Activated T-helper 1 cell treated with anti-CD3 and anti-CD28 coated beads, Interleukin-12 subunit alpha, Interleukin-12 subunit beta, Interleukin-2, Interleukin-4 antibody, amounts not matched to agents 30 ng/mL and 10 ng/mL and 1 ng/mL, durations not matched to agents 14 hours and 24 hours and 36 hours (primary cell): ENCODE measurements at regions of chr5 and their contacts with region 1.

Region 1: GRCh38 chr5:68315679-68316271 is 100.2 kb downstream of the PIK3R1 start:
- DNase-seq: peak; percentile 39
- H3K4me3 Mint-ChIP-seq: no peak overlapping the region
- H3K27ac Mint-ChIP-seq: no peak overlapping the region
- H3K4me1 Mint-ChIP-seq: peaks cover 18% of the 10 kb centered on the region
- H3K27me3 Mint-ChIP-seq: peaks cover 20% of the 10 kb centered on the region

Region 2: DNA sequence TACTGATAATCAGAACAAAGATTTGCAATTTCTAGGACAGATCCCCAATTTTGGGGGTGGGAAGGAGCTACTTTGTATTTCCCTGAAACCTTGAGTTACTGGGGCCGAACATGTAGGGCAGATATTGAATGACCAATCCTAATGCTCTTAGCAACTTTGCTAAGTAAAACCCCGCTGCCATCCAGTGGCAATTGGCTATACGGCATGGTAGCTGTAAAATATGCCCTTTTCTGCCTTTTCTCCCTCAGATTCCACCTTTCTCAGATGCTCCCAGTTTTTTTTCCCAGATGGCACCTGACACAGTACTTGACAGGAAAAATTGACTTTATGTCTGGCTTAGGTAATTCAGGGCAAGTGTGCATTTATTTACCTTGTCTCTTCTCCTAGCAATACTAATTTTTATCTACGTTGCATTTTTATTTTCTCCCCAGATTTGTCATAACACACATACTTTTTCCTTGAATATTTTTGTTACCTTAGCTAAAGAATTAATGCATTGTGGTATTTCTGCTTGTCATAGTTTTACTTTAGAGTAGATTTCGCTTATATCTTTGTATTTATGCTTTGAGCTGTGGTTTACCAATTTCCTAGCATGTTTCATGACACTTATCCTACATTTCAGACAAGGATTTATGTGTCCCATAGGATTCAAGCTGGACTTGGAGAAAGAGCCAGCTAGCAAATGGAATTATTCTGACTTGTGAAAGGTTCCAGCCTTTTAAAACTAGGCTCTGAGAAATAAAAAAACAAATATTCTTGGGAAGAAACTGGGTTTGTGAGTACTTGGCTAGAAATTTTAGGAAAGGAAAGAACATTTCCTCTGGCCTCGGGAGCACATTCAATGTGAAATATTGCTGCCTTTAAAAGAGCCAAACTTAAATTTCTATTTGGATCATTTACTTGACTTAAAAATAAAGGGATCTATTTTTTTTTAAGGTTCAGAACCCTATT is 62.8 kb before region 1 on chr5:
- intact Hi-C with region 1: no loop called
- DNase-seq: no peak
- H3K4me3 Mint-ChIP-seq: no peak overlapping the region
- H3K27ac Mint-ChIP-seq: no peak overlapping the region
- H3K4me1 Mint-ChIP-seq: peaks cover 89% of the 10 kb centered on the region
- H3K27me3 Mint-ChIP-seq: peaks cover 2% of the 10 kb centered on the region

Region 3: DNA sequence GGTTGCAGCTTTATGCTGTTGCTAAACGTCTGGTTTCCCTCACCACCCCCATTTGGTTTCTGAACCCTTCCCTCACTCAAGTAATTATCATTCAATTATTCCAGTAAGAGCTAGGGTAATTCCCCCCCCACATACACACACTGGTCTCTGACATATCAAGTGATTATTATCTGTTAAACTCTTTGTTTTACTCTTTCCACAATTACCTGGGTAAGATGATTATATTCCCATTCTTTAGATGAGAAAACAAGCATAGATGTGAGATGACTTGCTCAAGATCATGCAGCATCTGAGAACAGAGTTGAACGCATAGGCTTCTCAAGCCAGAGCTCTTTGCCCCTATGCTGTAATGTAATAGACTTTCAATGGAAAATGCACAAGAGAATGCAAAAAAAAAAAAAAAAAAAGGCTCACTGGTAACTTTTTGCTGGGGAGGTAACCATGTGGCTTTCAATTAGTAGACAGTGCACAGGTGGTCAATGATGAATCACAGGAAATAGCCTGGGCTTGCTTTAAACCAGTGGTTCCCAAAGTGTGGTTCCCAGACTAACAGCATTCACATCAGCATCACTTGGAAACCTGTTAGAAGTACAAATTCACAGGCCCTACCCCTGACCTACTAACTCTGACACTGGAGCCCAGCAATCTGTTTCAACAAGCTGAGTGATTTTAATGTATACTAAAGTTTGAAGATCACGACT is 12.6 kb before region 1 on chr5:
- intact Hi-C with region 1: loop called (anchors 1 kb)
- DNase-seq: no peak
- H3K4me3 Mint-ChIP-seq: no peak overlapping the region
- H3K27ac Mint-ChIP-seq: peak overlapping the region; percentile 70
- H3K4me1 Mint-ChIP-seq: peaks cover 34% of the 10 kb centered on the region
- H3K27me3 Mint-ChIP-seq: peaks cover 12% of the 10 kb centered on the region

Region 4: DNA sequence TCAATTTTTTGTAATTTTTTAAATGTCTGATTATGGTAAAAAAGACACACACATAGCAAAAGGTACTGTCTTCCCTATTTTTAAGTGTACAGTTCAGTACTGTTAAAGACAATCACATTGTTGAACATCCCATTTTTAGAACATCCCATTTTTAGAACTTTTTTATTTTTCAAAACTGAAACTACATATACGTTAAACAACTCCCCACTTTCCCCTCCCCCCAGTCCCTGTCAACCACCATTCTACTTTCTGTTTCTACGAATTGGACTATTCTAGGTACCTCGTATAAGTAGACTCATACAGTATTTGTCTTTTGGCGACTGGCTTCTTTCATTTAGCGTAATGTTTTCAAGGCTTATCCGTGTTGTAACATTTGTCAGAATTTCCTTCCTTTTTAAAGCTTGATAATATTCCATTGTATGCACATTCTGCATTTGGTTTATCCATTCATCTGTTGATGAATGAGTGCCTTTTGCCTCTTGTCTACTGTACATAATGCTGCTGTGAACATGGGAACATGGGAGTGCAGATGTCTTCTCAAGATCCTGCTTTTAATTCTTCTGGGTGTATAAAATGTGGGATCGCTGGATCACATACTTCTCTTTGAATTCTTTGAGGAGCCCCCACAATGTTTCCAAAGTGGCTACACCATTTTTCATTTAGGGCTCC is 53.8 kb after region 1 on chr5:
- intact Hi-C with region 1: no loop called
- DNase-seq: peak; percentile 48
- H3K4me3 Mint-ChIP-seq: peak overlapping the region; percentile 46
- H3K27ac Mint-ChIP-seq: peak overlapping the region; percentile 79
- H3K4me1 Mint-ChIP-seq: peaks cover 61% of the 10 kb centered on the region
- H3K27me3 Mint-ChIP-seq: peaks cover 1% of the 10 kb centered on the region